Activated naive CD4-positive, alpha-beta T cell treated with anti-CD3 and anti-CD28 coated beads for 36 hours (primary cell): ENCODE measurements at regions of chr17 and their contacts with region 1.

Region 1: GRCh38 chr17:76121932-76122430 is 18.4 kb upstream of the EXOC7 start:
- DNase-seq: peak; percentile 39
- H3K4me3 Mint-ChIP-seq: peak overlapping the region; percentile 21
- H3K27ac Mint-ChIP-seq: peak overlapping the region; percentile 80
- H3K4me1 Mint-ChIP-seq: peaks cover 19% of the 10 kb centered on the region
- H3K27me3 Mint-ChIP-seq: no peaks in the 10 kb centered on the region

Region 2: DNA sequence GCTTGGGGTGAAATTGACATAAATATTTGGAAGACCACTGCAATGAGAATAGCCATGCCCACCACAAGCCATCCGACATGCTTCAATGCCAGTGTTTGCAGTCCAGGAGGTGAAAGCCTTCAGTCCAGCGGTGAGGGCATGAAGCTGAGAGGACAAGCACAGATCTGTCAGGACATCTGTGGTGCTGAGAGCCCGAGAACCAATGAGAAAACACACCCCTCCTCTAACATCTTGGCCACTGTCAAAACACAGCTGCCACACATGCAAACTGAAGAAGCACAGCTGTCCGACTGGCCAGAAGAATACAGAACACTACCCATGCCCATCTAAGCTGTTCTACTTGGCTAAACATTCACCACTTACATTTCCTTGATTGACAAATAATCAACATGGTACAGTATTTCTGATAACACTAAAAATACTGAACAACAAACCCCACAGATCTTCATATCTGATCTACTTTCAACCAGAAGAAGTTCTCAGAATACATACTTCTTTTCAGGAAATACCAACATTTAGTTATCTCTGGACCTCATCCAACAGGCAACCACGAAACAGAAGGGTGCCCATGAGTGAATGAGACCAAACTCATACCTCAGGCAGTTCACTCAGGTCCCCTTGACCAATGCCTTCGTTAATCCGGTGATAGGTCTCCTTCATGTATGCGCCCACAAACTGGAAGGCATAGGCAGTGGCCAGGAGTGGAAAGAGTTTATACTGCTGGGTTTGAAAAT is 171.0 kb before region 1 on chr17:
- CTCF ChIA-PET with region 1: no interaction called
- intact Hi-C with region 1: no loop called
- DNase-seq: no peak
- H3K4me3 Mint-ChIP-seq: no peak overlapping the region
- H3K27ac Mint-ChIP-seq: no peak overlapping the region
- H3K4me1 Mint-ChIP-seq: no peaks in the 10 kb centered on the region
- H3K27me3 Mint-ChIP-seq: no peaks in the 10 kb centered on the region

Region 3: GRCh38 chr17:76103274-76104139 is 18.5 kb before region 1 on chr17 and contains the start of gene EXOC7:
- CTCF ChIA-PET with region 1: interaction called, 10 read pairs
- intact Hi-C with region 1: no loop called
- DNase-seq: peak; percentile 95
- H3K4me3 Mint-ChIP-seq: peak within 1 kb of the TSS; percentile 94
- H3K27ac Mint-ChIP-seq: peak within 1 kb of the TSS; percentile 92
- H3K4me1 Mint-ChIP-seq: peaks cover 19% of the 10 kb centered on the region
- H3K27me3 Mint-ChIP-seq: no peaks in the 10 kb centered on the region
- total RNA-seq, gene EXOC7: 43.5 to 46.6 TPM

Region 4: GRCh38 chr17:76296186-76296585 is 174.2 kb after region 1 on chr17:
- CTCF ChIA-PET with region 1: interaction called, 7 read pairs
- intact Hi-C with region 1: loop called (anchors 1 kb)
- DNase-seq: no peak
- H3K4me3 Mint-ChIP-seq: no peak overlapping the region
- H3K27ac Mint-ChIP-seq: no peak overlapping the region
- H3K4me1 Mint-ChIP-seq: peaks cover 2% of the 10 kb centered on the region
- H3K27me3 Mint-ChIP-seq: no peaks in the 10 kb centered on the region